Activated B cell treated with CpG ODN at 0.5 μM for 24 hours (primary cell): ENCODE measurements at regions of chr6 and their contacts with region 1.

Region 1: GRCh38 chr6:25601800-25602673 is 50.0 kb upstream of the SCGN start:
- DNase-seq: no peak
- ATAC-seq: no peak
- H3K4me3 Mint-ChIP-seq: no peak overlapping the region
- H3K27ac Mint-ChIP-seq: no peak overlapping the region
- H3K4me1 Mint-ChIP-seq: no peaks in the 10 kb centered on the region
- H3K27me3 Mint-ChIP-seq: no peaks in the 10 kb centered on the region
- CTCF ChIP-seq: peak; percentile 41

Region 2: DNA sequence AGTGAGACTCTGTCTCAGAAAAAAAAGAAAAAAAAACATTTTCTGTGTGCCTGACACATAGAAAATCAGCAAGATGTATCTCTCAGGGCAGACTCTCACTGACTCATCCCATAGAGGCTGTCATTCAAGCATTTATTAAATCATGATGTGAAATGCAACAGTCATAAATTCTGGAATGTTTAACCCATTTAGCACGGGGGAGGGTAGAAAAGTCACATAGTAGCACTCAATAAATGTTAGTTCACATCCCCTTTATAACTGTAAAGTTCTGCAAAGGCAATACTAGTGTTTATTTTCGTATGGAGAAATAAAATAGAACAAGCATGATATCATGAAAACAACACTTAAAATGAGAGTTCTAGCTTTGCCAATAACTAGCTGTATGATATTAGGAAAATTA is 338.4 kb before region 1 on chr6:
- CTCF ChIA-PET with region 1: interaction called, 26 read pairs
- POLR2A ChIA-PET with region 1: no interaction called
- intact Hi-C with region 1: loop called (anchors 1 kb)
- DNase-seq: no peak
- ATAC-seq: no peak
- H3K4me3 Mint-ChIP-seq: no peak overlapping the region
- H3K27ac Mint-ChIP-seq: no peak overlapping the region
- H3K4me1 Mint-ChIP-seq: peaks cover 2% of the 10 kb centered on the region
- H3K27me3 Mint-ChIP-seq: peaks cover 5% of the 10 kb centered on the region
- CTCF ChIP-seq: no peak

Region 3: GRCh38 chr6:25556516-25556915 is 45.5 kb before region 1 on chr6:
- CTCF ChIA-PET with region 1: no interaction called
- POLR2A ChIA-PET with region 1: no interaction called
- intact Hi-C with region 1: loop called (anchors 5 kb)
- DNase-seq: peak; percentile 47
- ATAC-seq: peak; percentile 47
- H3K4me3 Mint-ChIP-seq: no peak overlapping the region
- H3K27ac Mint-ChIP-seq: no peak overlapping the region
- H3K4me1 Mint-ChIP-seq: peaks cover 9% of the 10 kb centered on the region
- H3K27me3 Mint-ChIP-seq: no peaks in the 10 kb centered on the region
- CTCF ChIP-seq: peak; percentile 90